Ovary (tissue), 10 donors: ENCODE measurements at regions of chr19 and their contacts with region 1.

Region 1: GRCh38 chr19:56778351-56778750 is 62.2 kb downstream of the PEG3 start:
- DNase-seq: no peak
- H3K4me3 ChIP-seq: no peak overlapping the region
- H3K27ac ChIP-seq: no peak overlapping the region
- H3K4me1 ChIP-seq: no peaks in the 10 kb centered on the region
- H3K27me3 ChIP-seq: no peaks in the 10 kb centered on the region
- CTCF ChIP-seq: no peak
- EP300 ChIP-seq: no peak
- POLR2A ChIP-seq: no peak

Region 2: GRCh38 chr19:56829596-56829995 is 51.2 kb after region 1 on chr19:
- intact Hi-C with region 1: loop called in 1 of 4 experiments (anchors 10 kb)
- DNase-seq: no peak
- H3K4me3 ChIP-seq: no peak overlapping the region
- H3K27ac ChIP-seq: no peak overlapping the region
- H3K4me1 ChIP-seq: peaks cover 13% of the 10 kb centered on the region
- H3K27me3 ChIP-seq: no peaks in the 10 kb centered on the region
- CTCF ChIP-seq: no peak
- EP300 ChIP-seq: no peak
- POLR2A ChIP-seq: no peak

Region 3: GRCh38 chr19:56877069-56877715 is 98.8 kb after region 1 on chr19:
- intact Hi-C with region 1: no loop called
- DNase-seq: no peak
- H3K4me3 ChIP-seq: no peak overlapping the region
- H3K27ac ChIP-seq: no peak overlapping the region
- H3K4me1 ChIP-seq: no peaks in the 10 kb centered on the region
- H3K27me3 ChIP-seq: no peaks in the 10 kb centered on the region
- CTCF ChIP-seq: no peak
- EP300 ChIP-seq: no peak
- POLR2A ChIP-seq: no peak

Region 4: GRCh38 chr19:56995303-56995702 is 217.0 kb after region 1 on chr19:
- intact Hi-C with region 1: no loop called
- DNase-seq: peak; percentile 56 to 80 (median 71)
- H3K4me3 ChIP-seq: no peak overlapping the region
- H3K27ac ChIP-seq: peak overlapping the region in 1 of 2 donors; percentile 94
- H3K4me1 ChIP-seq: peaks cover 19% of the 10 kb centered on the region
- H3K27me3 ChIP-seq: no peaks in the 10 kb centered on the region
- CTCF ChIP-seq: no peak
- EP300 ChIP-seq: no peak
- POLR2A ChIP-seq: no peak